OCI-LY7 (cell line): ENCODE measurements at regions of chr7 and their contacts with region 1.

Region 1: GRCh38 chr7:140479062-140479738 is at the start of gene MKRN1:
- DNase-seq: peak; percentile 94
- H3K4me3 ChIP-seq: peak within 1 kb of the TSS; percentile 98
- H3K27ac ChIP-seq: peak within 1 kb of the TSS; percentile 72
- H3K4me1 ChIP-seq: peaks cover 24% of the 10 kb centered on the region
- CTCF ChIP-seq: no peak
- total RNA-seq, gene MKRN1: 26.4 and 47.5 TPM in 2 replicates

Region 2: GRCh38 chr7:140397784-140398750 is 81.1 kb before region 1 on chr7 and contains the start of gene SLC37A3:
- CTCF ChIA-PET with region 1: no interaction called
- POLR2A ChIA-PET with region 1: interaction called, 6 read pairs
- intact Hi-C with region 1: loop called (anchors 1 kb)
- DNase-seq: peak; percentile 83
- H3K4me3 ChIP-seq: peak within 1 kb of the TSS; percentile 84
- H3K27ac ChIP-seq: no peak within 1 kb of the TSS
- H3K4me1 ChIP-seq: peaks cover 3% of the 10 kb centered on the region
- CTCF ChIP-seq: no peak
- total RNA-seq, gene SLC37A3: 6.6 and 8.0 TPM in 2 replicates

Region 3: DNA sequence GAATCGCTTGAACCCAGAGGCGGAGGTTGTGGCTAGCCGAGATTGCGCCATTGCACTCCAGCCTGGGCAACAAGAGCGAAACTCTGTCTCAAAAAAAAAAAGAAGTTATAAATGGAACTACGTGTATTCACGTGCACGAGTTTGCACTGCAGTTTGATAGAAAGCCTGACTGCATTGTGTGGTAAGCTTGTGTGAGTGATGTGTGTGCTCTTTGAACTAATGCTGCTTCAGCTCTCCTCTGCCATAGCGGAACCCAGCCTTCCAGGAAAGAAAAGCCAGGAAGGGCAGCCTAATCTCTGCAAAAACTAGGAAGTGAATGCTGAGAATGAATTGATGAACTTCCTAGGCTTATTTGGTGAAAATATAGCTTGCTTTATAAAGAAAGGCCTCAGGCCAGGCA is 15.7 kb after region 1 on chr7:
- CTCF ChIA-PET with region 1: no interaction called
- POLR2A ChIA-PET with region 1: interaction called, 11 read pairs
- intact Hi-C with region 1: loop called (anchors 1 kb)
- DNase-seq: no peak
- H3K4me3 ChIP-seq: no peak overlapping the region
- H3K27ac ChIP-seq: no peak overlapping the region
- H3K4me1 ChIP-seq: no peaks in the 10 kb centered on the region
- CTCF ChIP-seq: no peak

Region 4: GRCh38 chr7:140653319-140654108 is 174.3 kb after region 1 on chr7:
- CTCF ChIA-PET with region 1: no interaction called
- POLR2A ChIA-PET with region 1: interaction called, 3 read pairs
- intact Hi-C with region 1: loop called (anchors 2 kb)
- DNase-seq: peak; percentile 59
- H3K4me3 ChIP-seq: no peak overlapping the region
- H3K27ac ChIP-seq: no peak overlapping the region
- H3K4me1 ChIP-seq: peaks cover 9% of the 10 kb centered on the region
- CTCF ChIP-seq: peak; percentile 95

Region 5: DNA sequence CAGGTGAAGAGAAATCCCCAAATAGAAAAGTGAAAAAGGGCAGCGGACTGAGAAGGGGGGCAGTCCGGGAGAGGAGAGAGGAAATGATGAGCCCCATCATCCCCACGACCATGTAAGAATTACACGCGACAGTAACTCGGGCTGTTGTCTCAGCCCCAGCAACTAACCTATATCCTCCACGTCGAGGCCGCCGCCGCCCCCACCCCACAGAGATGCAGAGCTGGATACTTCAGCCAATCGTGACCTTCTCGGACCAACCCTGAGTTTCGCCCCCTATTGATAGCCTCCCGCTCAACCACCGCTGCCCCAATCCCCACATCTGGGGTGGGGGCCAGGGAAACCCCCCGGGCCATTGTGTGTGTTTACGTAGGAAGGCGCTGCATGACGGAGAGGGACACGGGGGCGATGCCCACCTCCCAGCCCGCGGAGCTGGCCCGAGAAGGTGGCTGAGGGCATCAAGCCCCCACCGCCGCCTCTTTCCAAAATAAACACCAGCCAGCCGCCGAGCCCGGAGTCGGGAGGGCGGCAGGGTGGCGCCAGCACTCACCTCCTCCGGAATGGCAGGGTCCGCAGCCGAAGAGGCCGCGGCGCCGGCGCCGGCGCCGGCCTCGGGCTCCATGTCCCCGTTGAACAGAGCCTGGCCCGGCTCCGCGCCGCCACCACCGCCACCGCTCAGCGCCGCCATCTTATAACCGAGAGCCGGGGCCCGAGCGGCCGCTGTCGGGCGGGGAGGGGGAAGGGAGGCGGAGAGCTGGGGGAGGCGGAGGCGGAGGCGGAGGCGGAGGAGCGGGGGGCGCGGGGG is 445.0 kb after region 1 on chr7:
- CTCF ChIA-PET with region 1: no interaction called
- POLR2A ChIA-PET with region 1: no interaction called
- intact Hi-C with region 1: loop called (anchors 5 kb)
- DNase-seq: peak; percentile 80
- H3K4me3 ChIP-seq: peak overlapping the region; percentile 92
- H3K27ac ChIP-seq: peak overlapping the region; percentile 73
- H3K4me1 ChIP-seq: peaks cover 36% of the 10 kb centered on the region
- CTCF ChIP-seq: peak; percentile 76